CD8-positive, alpha-beta T cell (primary cell): ENCODE measurements at regions of chr15 and their contacts with region 1.

Region 1: GRCh38 chr15:40338041-40338657 is 2.6 kb downstream of the CCDC9B start:
- DNase-seq: peak; percentile 54 to 86 (median 79)
- ATAC-seq: peak; percentile 96
- H3K4me3 ChIP-seq: no peak overlapping the region
- H3K4me3 Mint-ChIP-seq: no peak overlapping the region
- H3K27ac ChIP-seq: no peak overlapping the region
- H3K27ac Mint-ChIP-seq: no peak overlapping the region
- H3K4me1 ChIP-seq: peaks cover 17% of the 10 kb centered on the region
- H3K4me1 Mint-ChIP-seq: peaks cover 18% of the 10 kb centered on the region
- H3K27me3 ChIP-seq: no peaks in the 10 kb centered on the region
- H3K27me3 Mint-ChIP-seq: peaks cover 2% of the 10 kb centered on the region
- CTCF ChIP-seq: peak; percentile 82

Region 2: DNA sequence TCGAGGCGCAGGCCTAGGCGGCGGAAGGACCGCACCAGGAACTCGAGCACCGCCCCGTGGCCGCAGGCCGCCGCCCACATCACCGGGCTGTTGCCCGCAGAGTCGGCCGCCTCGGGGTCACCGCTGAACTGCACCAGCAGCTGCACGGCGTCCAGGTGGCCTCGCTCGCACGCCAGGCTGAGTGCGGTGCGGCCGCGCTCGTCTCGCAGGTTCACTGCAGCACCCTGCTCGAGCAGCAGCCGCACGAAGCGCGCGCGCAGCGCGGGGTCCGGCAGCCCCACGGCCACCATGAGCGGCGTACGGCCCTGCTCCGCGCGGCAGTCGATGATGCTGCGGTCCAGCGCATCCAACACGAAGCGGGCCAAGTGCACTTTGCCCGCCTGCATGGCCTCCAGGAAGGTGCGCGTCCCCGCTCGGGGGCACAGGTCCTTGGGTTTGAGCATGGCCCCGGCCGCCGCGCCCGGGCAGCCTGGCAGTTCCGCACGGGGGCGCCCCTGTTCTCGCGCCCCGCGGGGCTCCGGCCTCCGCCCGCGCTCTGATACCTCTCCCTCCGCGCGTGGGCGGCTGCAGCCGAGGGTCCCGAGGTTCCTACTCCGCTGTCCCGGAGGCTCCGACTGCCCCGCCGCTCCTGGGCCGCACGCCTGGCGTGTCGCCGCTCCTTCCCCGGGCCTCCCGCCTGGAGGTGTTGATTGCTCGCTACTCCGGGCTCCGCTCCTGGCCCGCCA is 55.8 kb before region 1 on chr15:
- CTCF ChIA-PET with region 1: interaction called, 497 read pairs
- POLR2A ChIA-PET with region 1: interaction called, 3 read pairs
- intact Hi-C with region 1: loop called (anchors 1 kb)
- DNase-seq: peak; percentile 26 to 73 (median 49)
- ATAC-seq: peak; percentile 74
- H3K4me3 ChIP-seq: peak overlapping the region; percentile 48 to 69
- H3K4me3 Mint-ChIP-seq: peak overlapping the region; percentile 79
- H3K27ac ChIP-seq: no peak overlapping the region
- H3K27ac Mint-ChIP-seq: no peak overlapping the region
- H3K4me1 ChIP-seq: peaks cover 5% of the 10 kb centered on the region
- H3K4me1 Mint-ChIP-seq: peaks cover 5% of the 10 kb centered on the region
- H3K27me3 ChIP-seq: peaks cover 11 to 14% of the 10 kb centered on the region in 2 experiments
- H3K27me3 Mint-ChIP-seq: peaks cover 18% of the 10 kb centered on the region
- CTCF ChIP-seq: peak; percentile 56

Region 3: DNA sequence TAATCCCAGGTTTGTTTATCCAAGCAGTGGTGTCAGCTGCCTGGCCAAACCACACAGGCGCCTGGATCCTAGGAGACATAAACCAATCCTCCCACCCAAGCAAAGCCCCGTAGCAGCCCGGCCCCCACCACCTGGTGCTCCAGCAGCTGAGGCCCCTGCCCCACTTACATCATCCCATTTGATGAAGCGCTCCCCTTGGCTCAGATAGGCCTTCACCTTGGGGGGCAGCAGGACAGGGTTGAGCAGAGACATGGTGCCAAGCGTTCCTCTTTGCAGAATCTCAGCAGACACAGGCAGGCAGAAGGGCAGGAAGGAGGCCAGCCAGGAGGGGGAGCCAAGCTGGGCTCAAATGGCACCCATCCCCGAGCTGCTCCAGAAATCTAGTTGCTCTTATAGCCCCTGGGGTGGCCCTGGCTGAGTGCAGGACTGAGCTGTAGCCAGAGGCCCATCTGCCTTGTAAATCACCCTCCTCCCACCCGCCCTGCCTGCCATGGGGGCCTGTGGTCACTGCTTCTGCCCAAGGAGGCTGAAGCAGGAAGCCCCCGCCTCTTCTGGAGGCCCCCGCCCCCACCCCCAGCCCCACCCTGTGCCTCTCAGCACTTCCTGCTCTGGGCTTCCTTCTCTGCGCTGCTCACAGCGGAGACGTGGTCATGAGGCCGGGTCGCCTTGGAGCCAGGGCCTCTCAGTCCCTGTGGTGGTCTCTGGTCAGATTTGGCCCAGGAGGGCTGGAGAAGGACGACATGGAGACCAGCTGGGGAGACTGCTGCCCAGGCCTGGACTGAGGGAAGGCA is 30.5 kb before region 1 on chr15 and contains the start of gene PLCB2:
- CTCF ChIA-PET with region 1: interaction called, 421 read pairs
- POLR2A ChIA-PET with region 1: interaction called, 5 read pairs
- intact Hi-C with region 1: loop called (anchors 1 kb)
- DNase-seq: peak; percentile 45 to 86 (median 72)
- ATAC-seq: peak; percentile 76
- H3K4me3 ChIP-seq: peak within 1 kb of the TSS; percentile 92 to 97
- H3K4me3 Mint-ChIP-seq: peak within 1 kb of the TSS; percentile 95
- H3K27ac ChIP-seq: peak within 1 kb of the TSS; percentile 76 to 87
- H3K27ac Mint-ChIP-seq: peak within 1 kb of the TSS; percentile 96
- H3K4me1 ChIP-seq: peaks cover 31% of the 10 kb centered on the region
- H3K4me1 Mint-ChIP-seq: peaks cover 46% of the 10 kb centered on the region
- H3K27me3 ChIP-seq: no peaks in the 10 kb centered on the region
- H3K27me3 Mint-ChIP-seq: no peaks in the 10 kb centered on the region
- CTCF ChIP-seq: peak; percentile 57
- total RNA-seq, gene PLCB2: 154 to 167 TPM

Region 4: DNA sequence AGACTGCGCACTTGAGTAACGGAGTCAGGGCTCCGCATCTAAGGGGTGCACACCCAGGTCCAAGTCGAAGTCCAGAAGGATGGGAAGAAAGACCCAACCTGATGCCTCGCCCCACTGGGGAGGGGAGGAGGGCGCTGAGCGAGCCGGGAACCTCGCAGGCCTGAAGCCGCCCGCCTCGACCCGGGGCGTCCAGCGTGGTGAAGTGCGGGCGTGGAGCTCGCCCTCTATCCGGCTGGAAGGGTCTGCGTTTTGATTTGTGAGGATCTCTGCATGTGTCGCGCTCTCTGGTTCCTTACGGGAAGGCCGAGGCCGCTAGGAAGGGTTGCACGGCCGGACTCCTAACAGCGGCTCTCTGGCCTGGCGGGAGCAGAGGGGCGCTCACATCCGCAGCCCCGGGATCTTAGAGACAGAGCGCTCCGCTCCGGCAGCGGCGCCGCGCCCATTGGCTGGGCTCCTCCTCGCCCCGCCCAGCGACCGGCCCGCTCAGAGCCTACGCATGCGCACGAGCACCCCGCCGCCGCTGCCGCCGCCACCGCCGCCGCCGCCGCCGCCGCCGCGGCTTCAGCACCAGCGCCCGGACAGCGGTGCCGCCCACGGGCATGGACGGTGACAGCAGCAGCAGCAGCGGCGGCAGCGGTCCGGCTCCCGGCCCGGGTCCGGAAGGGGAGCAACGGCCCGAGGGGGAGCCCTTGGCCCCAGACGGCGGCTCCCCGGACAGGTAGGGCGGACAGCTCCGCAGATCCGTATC is 19.7 kb after region 1 on chr15 and contains the start of gene DISP2:
- CTCF ChIA-PET with region 1: interaction called, 29 read pairs
- POLR2A ChIA-PET with region 1: no interaction called
- intact Hi-C with region 1: no loop called
- DNase-seq: peak; percentile 82 to 93 (median 88)
- ATAC-seq: peak; percentile 94
- H3K4me3 ChIP-seq: peak within 1 kb of the TSS; percentile 63 to 65
- H3K4me3 Mint-ChIP-seq: peak within 1 kb of the TSS; percentile 83
- H3K27ac ChIP-seq: no peak within 1 kb of the TSS
- H3K27ac Mint-ChIP-seq: no peak within 1 kb of the TSS
- H3K4me1 ChIP-seq: peaks cover 13% of the 10 kb centered on the region
- H3K4me1 Mint-ChIP-seq: peaks cover 9% of the 10 kb centered on the region
- H3K27me3 ChIP-seq: no peaks in the 10 kb centered on the region
- H3K27me3 Mint-ChIP-seq: peaks cover 2% of the 10 kb centered on the region
- CTCF ChIP-seq: no peak
- total RNA-seq, gene DISP2: 0.05 to 0.25 TPM

Region 5: GRCh38 chr15:40405501-40406381 is 67.6 kb after region 1 on chr15 and contains the start of gene IVD:
- CTCF ChIA-PET with region 1: interaction called, 12 read pairs
- POLR2A ChIA-PET with region 1: no interaction called
- intact Hi-C with region 1: no loop called
- DNase-seq: peak; percentile 79 to 95 (median 91)
- ATAC-seq: peak; percentile 99
- H3K4me3 ChIP-seq: peak within 1 kb of the TSS; percentile 81 to 85
- H3K4me3 Mint-ChIP-seq: peak within 1 kb of the TSS; percentile 81
- H3K27ac ChIP-seq: peak within 1 kb of the TSS; percentile 67 to 69
- H3K27ac Mint-ChIP-seq: peak within 1 kb of the TSS; percentile 74
- H3K4me1 ChIP-seq: peaks cover 21% of the 10 kb centered on the region
- H3K4me1 Mint-ChIP-seq: peaks cover 37% of the 10 kb centered on the region
- H3K27me3 ChIP-seq: no peaks in the 10 kb centered on the region
- H3K27me3 Mint-ChIP-seq: no peaks in the 10 kb centered on the region
- CTCF ChIP-seq: no peak
- total RNA-seq, gene IVD: 46.6 to 54.9 TPM

Region 6: DNA sequence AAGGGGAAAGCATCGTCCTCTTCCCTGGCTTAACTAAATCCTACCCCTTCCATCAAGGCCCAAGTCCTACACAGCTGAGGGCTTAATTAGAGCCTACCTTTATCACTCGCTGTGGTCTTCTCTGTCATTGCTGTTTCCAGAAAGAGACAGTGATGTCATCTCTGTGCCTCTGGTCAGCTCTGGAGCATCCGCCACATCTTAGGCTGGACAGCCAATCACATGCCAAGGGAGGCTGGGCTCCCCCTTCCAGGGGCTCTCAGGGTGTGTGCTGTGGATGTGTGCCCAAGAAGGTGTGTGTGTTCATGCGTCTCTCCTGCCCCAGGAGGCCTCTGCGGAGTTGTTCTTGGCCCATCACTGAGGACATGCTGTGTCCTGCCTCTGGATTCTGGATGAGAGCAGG is 175.5 kb after region 1 on chr15:
- CTCF ChIA-PET with region 1: no interaction called
- POLR2A ChIA-PET with region 1: no interaction called
- intact Hi-C with region 1: no loop called
- DNase-seq: no peak
- ATAC-seq: no peak
- H3K4me3 ChIP-seq: no peak overlapping the region
- H3K4me3 Mint-ChIP-seq: no peak overlapping the region
- H3K27ac ChIP-seq: no peak overlapping the region
- H3K27ac Mint-ChIP-seq: no peak overlapping the region
- H3K4me1 ChIP-seq: peaks cover 12% of the 10 kb centered on the region
- H3K4me1 Mint-ChIP-seq: peaks cover 21% of the 10 kb centered on the region
- H3K27me3 ChIP-seq: peaks cover 12 to 13% of the 10 kb centered on the region in 2 experiments
- H3K27me3 Mint-ChIP-seq: peaks cover 42% of the 10 kb centered on the region
- CTCF ChIP-seq: no peak